Astrocyte of the spinal cord (primary cell): ENCODE measurements at regions of chr2 and their contacts with region 1.

Region 1: DNA sequence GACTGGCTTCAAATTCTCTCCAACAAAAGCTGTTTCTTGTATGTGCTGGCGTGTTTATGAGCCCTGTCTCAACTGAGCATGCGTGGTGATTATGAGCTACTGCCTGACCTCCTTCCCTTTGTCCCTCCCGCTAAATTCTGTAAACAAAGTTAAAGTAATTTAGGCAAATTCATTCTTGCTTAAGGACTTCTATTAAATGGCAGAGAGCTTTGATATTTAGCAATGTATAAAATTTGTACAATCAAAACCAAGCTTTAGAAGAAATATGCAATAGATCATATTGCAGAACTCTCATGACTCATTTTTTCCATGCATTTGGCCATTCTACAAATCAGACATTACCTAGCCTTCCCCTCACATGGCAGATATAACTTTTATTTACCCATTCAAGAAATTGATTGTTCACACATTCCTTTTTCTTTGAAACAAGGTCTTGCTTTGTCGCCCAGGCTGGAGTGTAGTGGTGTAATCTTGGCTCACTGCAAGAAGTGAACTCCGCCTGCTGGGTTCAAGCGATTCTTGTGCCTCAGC is 18.2 kb downstream of the IGFBP2 start:
- DNase-seq: peak; percentile 74
- H3K4me3 ChIP-seq: no peak overlapping the region
- CTCF ChIP-seq: no peak

Region 2: GRCh38 chr2:215522237-215522636 is 1129.2 kb before region 1 on chr2:
- in situ Hi-C with region 1: no loop called
- DNase-seq: no peak
- H3K4me3 ChIP-seq: no peak overlapping the region
- CTCF ChIP-seq: no peak

Region 3: DNA sequence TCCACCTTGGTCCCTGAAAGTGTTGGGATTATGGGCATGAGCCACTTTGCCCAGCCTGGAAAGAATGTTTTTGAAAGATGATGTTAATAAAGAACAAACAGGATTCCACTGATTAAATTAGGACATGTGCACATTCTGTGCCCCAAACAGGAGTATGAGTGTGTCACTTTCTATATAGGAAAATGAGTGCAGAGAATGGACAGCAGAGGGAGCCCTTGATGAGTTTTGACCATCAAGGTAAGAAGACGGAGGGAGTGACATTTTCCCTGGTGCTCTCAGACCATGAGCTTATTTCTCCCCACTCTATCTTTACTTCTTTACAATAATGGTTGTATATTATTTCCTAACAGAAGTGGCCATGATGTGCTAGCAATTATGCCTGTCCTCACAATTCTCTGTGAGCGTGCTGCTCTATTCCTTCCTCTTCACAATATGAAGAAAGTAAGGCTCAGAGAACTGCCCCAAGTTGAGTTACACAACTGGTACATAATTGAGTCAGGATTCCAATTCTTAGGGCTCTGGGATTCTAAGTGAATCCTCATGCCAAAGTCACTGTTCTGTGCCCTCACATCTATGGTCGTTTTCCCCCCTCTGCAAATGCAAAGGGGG is 132.2 kb before region 1 on chr2:
- in situ Hi-C with region 1: loop called (anchors 10 kb)
- DNase-seq: peak; percentile 87
- H3K4me3 ChIP-seq: no peak overlapping the region
- CTCF ChIP-seq: peak; percentile 74

Region 4: GRCh38 chr2:216560838-216561270 is 90.6 kb before region 1 on chr2:
- in situ Hi-C with region 1: no loop called
- DNase-seq: peak; percentile 72
- H3K4me3 ChIP-seq: no peak overlapping the region
- CTCF ChIP-seq: no peak

Region 5: GRCh38 chr2:216752855-216753505 is 101.6 kb after region 1 on chr2:
- in situ Hi-C with region 1: no loop called
- DNase-seq: no peak
- H3K4me3 ChIP-seq: no peak overlapping the region
- CTCF ChIP-seq: no peak

Region 6: DNA sequence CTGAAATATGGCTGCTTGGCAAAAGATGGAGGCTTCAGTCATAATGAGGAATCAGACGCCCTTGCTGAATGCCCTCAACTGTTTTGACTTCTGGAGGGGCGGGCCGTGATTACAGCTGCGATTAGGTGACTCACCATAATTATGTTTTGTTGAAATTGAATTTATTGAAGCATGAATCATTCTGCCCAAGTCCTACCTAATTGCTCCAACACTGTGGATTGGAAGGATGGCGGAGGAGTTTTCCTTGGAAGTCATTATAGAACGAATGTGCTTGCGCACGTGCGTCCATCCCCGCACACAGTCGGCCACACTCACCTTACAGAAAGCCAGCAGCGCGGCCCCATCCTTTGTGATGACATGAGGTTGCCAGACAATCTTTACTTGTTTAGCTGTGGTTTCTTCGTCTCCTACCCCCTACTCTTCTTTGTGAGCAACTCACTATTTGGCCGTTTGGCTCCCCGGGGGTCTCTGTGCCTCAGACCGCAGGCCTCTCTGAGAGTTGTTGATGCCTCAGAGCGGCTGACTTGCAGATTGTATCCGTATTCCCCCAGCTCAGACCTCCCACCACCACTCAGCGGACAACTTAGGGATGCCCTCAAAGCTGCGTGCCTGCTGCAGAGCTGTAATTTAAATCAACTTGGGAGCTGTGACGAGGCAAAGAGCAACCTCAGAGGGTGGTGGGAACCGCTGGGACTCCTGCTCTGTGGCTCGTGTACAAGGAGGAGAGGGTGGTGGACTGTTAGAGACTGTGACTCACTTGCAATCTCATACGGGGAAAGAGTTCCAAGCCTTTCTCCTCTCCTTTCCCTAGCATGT is 837.9 kb after region 1 on chr2:
- in situ Hi-C with region 1: no loop called
- DNase-seq: peak; percentile 33
- H3K4me3 ChIP-seq: no peak overlapping the region
- CTCF ChIP-seq: no peak